ENCODE measurements at regions of chr5 and their contacts with region 1.

Region 1: GRCh38 chr5:91151947-91152346 is 231.2 kb downstream of the ARRDC3 start:
- DNase-seq: no peak
- ATAC-seq: peak; percentile 94

Region 2: GRCh38 chr5:90461292-90461691 is 690.7 kb before region 1 on chr5:
- intact Hi-C with region 1: no loop called
- DNase-seq: no peak
- ATAC-seq: no peak

Region 3: GRCh38 chr5:90932052-90932699 is 219.8 kb before region 1 on chr5:
- intact Hi-C with region 1: no loop called
- DNase-seq: no peak
- ATAC-seq: peak; percentile 56

Region 4: GRCh38 chr5:91038180-91038808 is 113.7 kb before region 1 on chr5:
- intact Hi-C with region 1: no loop called
- DNase-seq: no peak
- ATAC-seq: no peak

Region 5: GRCh38 chr5:91110686-91111085 is 41.3 kb before region 1 on chr5:
- intact Hi-C with region 1: loop called (anchors 5 kb)
- DNase-seq: no peak
- ATAC-seq: peak; percentile 86

Region 6: GRCh38 chr5:91219803-91220371 is 67.9 kb after region 1 on chr5:
- intact Hi-C with region 1: loop called (anchors 10 kb)
- DNase-seq: no peak
- ATAC-seq: no peak

Measured in Right ventricle myocardium inferior (tissue), 1 donor.